Activated CD4-positive, alpha-beta T cell treated with anti-CD3 and anti-CD28 coated beads, Interleukin-2, amount 10 ng/mL, durations not matched to agents 24 days and 14 days (primary cell): ENCODE measurements at regions of chr6 and their contacts with region 1.

Region 1: DNA sequence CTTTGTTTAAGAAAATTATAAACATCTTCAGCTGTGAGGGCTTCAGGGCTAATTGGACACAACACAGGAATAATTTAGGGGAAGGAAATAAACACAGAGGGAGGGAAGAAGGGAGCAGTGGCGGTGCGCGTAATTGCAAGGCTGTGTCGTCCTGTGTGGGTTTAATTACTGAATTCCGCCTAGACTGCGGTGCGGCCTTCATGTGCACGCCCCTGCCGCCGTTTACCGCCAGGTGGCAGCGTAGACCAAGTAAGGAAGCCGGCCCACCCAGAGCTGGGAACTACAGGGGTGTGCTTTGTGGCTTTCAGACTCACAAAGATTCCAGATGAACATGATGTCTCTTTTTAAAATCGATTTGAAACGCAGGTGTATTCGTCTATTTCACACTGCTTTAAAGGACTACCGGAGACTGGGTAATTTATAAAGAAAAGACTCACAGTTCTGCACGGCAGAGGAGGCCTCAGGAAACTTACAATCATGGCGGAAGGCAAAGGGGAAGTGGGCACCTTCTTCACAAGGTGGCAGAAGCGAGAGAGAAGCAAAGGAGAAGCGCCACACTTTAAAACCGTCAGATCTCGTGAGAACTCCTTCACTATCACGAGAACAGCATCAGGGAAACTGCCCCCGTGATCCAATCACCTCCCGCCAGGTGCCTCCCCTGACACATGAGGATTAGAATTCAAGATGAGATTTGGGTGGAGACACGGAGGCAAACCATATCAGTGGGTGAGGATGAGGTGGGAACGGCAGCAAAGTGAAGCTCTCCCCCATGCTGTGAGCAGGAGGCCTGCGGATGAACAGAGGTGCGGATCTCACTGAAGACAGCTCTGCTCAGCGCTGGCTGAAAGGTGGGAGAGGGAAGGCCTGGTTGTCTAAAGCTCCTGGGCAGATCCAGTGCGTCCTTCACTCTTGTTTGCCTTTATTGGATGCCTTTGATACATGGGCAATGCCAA is 222.0 kb upstream of the PDE10A start:
- DNase-seq: peak; percentile 86
- H3K4me3 Mint-ChIP-seq: no peak overlapping the region
- H3K27ac Mint-ChIP-seq: no peak overlapping the region
- H3K4me1 Mint-ChIP-seq: peaks cover 4% of the 10 kb centered on the region
- H3K27me3 Mint-ChIP-seq: peaks cover 5% of the 10 kb centered on the region

Region 2: GRCh38 chr6:166097915-166098522 is 212.9 kb after region 1 on chr6:
- intact Hi-C with region 1: loop called (anchors 2 kb)
- DNase-seq: peak; percentile 83
- H3K4me3 Mint-ChIP-seq: no peak overlapping the region
- H3K27ac Mint-ChIP-seq: no peak overlapping the region
- H3K4me1 Mint-ChIP-seq: peaks cover 2% of the 10 kb centered on the region
- H3K27me3 Mint-ChIP-seq: peaks cover 20% of the 10 kb centered on the region

Region 3: DNA sequence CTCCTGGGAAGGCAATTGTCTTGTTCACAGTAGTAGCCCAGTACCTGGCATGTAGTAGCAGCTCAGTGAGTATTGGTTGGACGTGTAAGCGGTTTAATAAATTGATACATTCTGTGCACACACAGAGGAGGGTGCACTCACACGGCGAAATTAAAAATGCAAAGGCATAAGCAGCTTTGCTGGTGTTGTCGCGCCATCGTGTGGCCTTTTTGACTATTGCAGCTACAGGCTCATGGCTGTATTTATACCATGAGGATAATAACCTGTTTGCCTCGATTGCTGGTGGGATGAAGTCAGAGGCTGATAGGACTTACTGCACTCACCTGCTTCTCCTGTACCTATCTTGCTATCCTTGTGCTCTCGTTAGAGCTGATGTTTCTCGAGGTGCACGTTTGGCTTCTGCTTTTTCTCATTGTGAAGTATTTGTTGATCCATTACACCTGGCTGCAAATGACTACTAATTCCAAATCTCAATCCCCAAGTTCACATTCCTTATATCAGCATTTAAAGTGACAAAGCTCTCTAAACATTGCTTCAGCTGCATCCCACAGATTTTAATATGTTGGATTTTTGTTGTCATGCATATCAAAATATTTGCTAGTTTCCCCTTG is 221.1 kb after region 1 on chr6:
- intact Hi-C with region 1: loop called (anchors 1 kb)
- DNase-seq: peak; percentile 88
- H3K4me3 Mint-ChIP-seq: no peak overlapping the region
- H3K27ac Mint-ChIP-seq: no peak overlapping the region
- H3K4me1 Mint-ChIP-seq: peaks cover 2% of the 10 kb centered on the region
- H3K27me3 Mint-ChIP-seq: peaks cover 4% of the 10 kb centered on the region